T-cell (primary cell): ENCODE measurements at regions of chr2 and their contacts with region 1.

Region 1: DNA sequence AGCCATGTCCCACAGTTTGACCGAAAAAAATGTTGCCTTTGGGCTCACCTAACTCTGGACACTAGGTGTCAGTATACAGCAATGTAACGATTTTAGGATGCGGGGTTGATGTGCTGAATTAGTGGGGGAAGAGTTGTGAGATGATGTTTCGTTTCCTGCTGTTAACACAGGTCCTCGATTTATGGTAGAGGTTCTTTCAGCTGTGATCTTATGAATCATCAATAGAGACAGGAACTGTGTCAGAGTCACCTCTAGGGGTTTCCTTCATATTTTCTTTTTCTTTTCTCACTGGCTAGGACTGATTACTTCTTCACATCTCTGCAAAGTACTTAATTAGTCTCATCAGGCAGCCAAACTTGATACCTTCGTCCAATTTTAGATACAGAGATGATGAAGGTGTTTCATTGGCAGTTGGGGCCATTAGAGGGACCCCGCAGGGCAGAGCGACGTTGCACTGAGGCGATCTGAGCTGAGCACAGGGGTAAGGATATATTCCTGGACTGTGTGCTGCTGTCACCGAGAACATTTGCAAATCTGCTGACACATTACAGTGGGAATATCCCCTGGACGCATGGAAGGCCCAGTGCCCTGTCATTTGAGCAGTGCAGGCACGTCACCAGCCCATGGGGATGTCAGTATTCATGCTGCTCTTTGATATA is 10.2 kb upstream of the MMADHC start:
- DNase-seq: peak in 33 of 35 experiments; percentile 4 to 81 (median 32)
- ATAC-seq: peak; percentile 90 to 95 (median 93)
- H3K4me3 ChIP-seq: no peak overlapping the region
- H3K4me3 Mint-ChIP-seq: peak overlapping the region in 1 of 3 donors; percentile 10
- H3K27ac ChIP-seq: no peak overlapping the region
- H3K27ac Mint-ChIP-seq: peak overlapping the region; percentile 11 to 79
- H3K4me1 ChIP-seq: peaks cover 0 to 7% of the 10 kb centered on the region in 2 experiments
- H3K4me1 Mint-ChIP-seq: peaks cover 17 to 21% (median 17%) of the 10 kb centered on the region in 3 donors
- H3K27me3 ChIP-seq: no peaks in the 10 kb centered on the region
- H3K27me3 Mint-ChIP-seq: peaks cover 8 to 13% of the 10 kb centered on the region in 2 donors

Region 2: GRCh38 chr2:148764815-148765214 is 833.0 kb before region 1 on chr2:
- CTCF ChIA-PET with region 1: no interaction called
- POLR2A ChIA-PET with region 1: no interaction called
- DNase-seq: peak in 4 of 35 experiments; percentile 6 to 52 (median 6)
- ATAC-seq: peak in 3 of 4 experiments; percentile 73 to 99 (median 77)
- H3K4me3 ChIP-seq: no peak overlapping the region
- H3K4me3 Mint-ChIP-seq: no peak overlapping the region
- H3K27ac ChIP-seq: no peak overlapping the region
- H3K27ac Mint-ChIP-seq: peak overlapping the region; percentile 58 to 61
- H3K4me1 ChIP-seq: peaks cover 0 to 2% of the 10 kb centered on the region in 2 experiments
- H3K4me1 Mint-ChIP-seq: peaks cover 31 to 40% (median 39%) of the 10 kb centered on the region in 3 donors
- H3K27me3 ChIP-seq: no peaks in the 10 kb centered on the region
- H3K27me3 Mint-ChIP-seq: no peaks in the 10 kb centered on the region

Region 3: GRCh38 chr2:149587220-149587949 is 10.4 kb before region 1 on chr2 and contains the start of gene MMADHC:
- CTCF ChIA-PET with region 1: interaction called, 8 to 11 read pairs
- POLR2A ChIA-PET with region 1: interaction called in 1 of 2 experiments, 4 read pairs
- DNase-seq: peak; percentile 80 to 97 (median 91)
- ATAC-seq: peak; percentile 97 to 98 (median 98)
- H3K4me3 ChIP-seq: peak within 1 kb of the TSS; percentile 97 to 100
- H3K4me3 Mint-ChIP-seq: peak within 1 kb of the TSS; percentile 96 to 99 (median 99)
- H3K27ac ChIP-seq: peak within 1 kb of the TSS; percentile 96
- H3K27ac Mint-ChIP-seq: peak within 1 kb of the TSS; percentile 96 to 99
- H3K4me1 ChIP-seq: peaks cover 8 to 27% of the 10 kb centered on the region in 2 experiments
- H3K4me1 Mint-ChIP-seq: peaks cover 44 to 57% (median 50%) of the 10 kb centered on the region in 3 donors
- H3K27me3 ChIP-seq: no peaks in the 10 kb centered on the region
- H3K27me3 Mint-ChIP-seq: peaks cover 18 to 23% of the 10 kb centered on the region in 2 donors
- total RNA-seq, gene MMADHC: 56.8 to 65.0 (median 61.4) TPM

Region 4: DNA sequence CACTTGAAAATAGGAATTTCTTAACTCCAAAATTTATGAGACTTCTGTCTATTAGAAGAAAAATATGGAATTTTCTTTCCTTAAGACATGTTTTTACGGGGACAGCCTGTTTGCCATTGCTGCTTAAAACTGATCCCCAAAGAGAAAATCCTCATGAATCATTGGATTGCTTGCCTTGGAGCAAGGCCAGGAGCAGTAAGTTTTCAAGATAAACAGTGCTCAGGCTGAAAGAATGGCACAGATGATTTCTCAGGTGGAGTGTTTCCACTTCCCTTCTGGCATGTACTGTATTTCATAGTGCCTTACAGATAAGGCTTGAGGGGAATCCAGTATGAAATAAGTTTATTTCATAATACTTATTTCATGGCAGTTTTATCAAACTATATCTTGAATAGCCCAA is 64.0 kb after region 1 on chr2:
- CTCF ChIA-PET with region 1: no interaction called
- POLR2A ChIA-PET with region 1: no interaction called
- DNase-seq: no peak
- ATAC-seq: no peak
- H3K4me3 ChIP-seq: no peak overlapping the region
- H3K4me3 Mint-ChIP-seq: no peak overlapping the region
- H3K27ac ChIP-seq: no peak overlapping the region
- H3K27ac Mint-ChIP-seq: no peak overlapping the region
- H3K4me1 ChIP-seq: no peaks in the 10 kb centered on the region
- H3K4me1 Mint-ChIP-seq: no peaks in the 10 kb centered on the region
- H3K27me3 ChIP-seq: no peaks in the 10 kb centered on the region
- H3K27me3 Mint-ChIP-seq: peaks cover 4 to 13% of the 10 kb centered on the region in 2 donors

Region 5: DNA sequence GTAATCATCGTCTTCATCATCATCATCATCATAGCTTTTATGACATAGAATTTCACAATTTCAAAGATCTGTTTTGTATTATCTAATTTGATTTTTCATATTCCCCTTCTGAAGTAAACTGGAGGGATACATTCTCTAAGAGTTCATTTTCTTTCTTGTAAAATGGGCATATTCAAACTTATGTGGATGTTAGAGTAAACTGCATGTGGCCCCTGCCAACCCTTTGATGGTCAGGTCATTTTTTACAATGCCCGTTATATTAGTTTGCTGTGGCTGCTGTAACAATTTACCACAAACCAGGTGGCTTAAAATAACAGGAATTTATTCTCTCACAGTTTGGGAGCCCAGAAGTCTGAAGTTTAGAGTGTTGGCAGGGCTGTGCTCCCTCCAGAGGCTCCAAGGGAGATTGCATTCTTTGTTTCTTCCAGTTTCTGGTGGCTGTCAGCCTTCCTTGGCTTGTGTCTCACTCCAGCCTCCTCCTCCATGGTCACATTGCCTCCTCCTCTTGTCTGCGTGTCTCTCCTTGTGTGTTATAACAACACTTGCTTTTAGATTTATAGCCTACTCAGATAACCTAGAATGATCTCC is 117.3 kb after region 1 on chr2:
- CTCF ChIA-PET with region 1: no interaction called
- POLR2A ChIA-PET with region 1: no interaction called
- DNase-seq: no peak
- ATAC-seq: no peak
- H3K4me3 ChIP-seq: no peak overlapping the region
- H3K4me3 Mint-ChIP-seq: no peak overlapping the region
- H3K27ac ChIP-seq: no peak overlapping the region
- H3K27ac Mint-ChIP-seq: no peak overlapping the region
- H3K4me1 ChIP-seq: no peaks in the 10 kb centered on the region
- H3K4me1 Mint-ChIP-seq: no peaks in the 10 kb centered on the region
- H3K27me3 ChIP-seq: no peaks in the 10 kb centered on the region
- H3K27me3 Mint-ChIP-seq: peaks cover 4 to 10% of the 10 kb centered on the region in 2 donors

Region 6: GRCh38 chr2:149885468-149885867 is 287.7 kb after region 1 on chr2:
- CTCF ChIA-PET with region 1: no interaction called
- POLR2A ChIA-PET with region 1: no interaction called
- DNase-seq: no peak
- ATAC-seq: no peak
- H3K4me3 ChIP-seq: no peak overlapping the region
- H3K4me3 Mint-ChIP-seq: no peak overlapping the region
- H3K27ac ChIP-seq: no peak overlapping the region
- H3K27ac Mint-ChIP-seq: no peak overlapping the region
- H3K4me1 ChIP-seq: no peaks in the 10 kb centered on the region
- H3K4me1 Mint-ChIP-seq: no peaks in the 10 kb centered on the region
- H3K27me3 ChIP-seq: no peaks in the 10 kb centered on the region
- H3K27me3 Mint-ChIP-seq: no peaks in the 10 kb centered on the region

Region 7: DNA sequence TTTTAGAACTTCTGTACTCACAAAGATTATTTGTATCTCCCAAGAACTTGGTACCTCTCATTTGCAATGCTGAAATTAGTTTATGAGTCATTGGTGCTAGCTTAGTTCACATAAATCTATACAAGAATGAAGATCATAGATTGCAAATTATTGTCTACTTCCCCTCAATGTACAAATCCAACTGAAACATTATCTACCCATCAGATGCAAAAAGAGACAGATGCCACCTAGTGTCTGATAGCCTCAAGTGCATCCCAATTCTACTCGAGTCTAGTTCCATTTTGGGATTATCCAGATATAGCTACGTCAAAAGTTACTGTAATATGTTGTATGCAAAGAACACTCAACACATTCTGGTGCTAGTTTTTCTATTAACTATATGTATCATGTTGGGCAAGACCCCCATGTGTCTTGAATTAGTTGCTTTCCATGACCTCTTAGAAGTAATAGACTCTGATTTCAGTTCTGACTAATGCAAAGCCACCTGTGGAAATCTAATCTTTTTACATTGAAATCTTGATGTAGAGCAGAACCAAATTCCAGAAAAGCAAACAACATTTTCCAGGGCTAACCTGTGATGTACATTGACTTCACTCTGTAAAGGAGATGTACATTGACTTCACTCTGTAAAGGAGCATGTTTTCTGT is 1453.9 kb after region 1 on chr2:
- CTCF ChIA-PET with region 1: interaction called, 6 to 22 read pairs
- POLR2A ChIA-PET with region 1: no interaction called
- DNase-seq: peak in 12 of 35 experiments; percentile 1 to 59 (median 6)
- ATAC-seq: peak in 3 of 4 experiments; percentile 37 to 64 (median 52)
- H3K4me3 ChIP-seq: no peak overlapping the region
- H3K4me3 Mint-ChIP-seq: no peak overlapping the region
- H3K27ac ChIP-seq: no peak overlapping the region
- H3K27ac Mint-ChIP-seq: no peak overlapping the region
- H3K4me1 ChIP-seq: no peaks in the 10 kb centered on the region
- H3K4me1 Mint-ChIP-seq: peaks cover 0 to 3% (median 2%) of the 10 kb centered on the region in 3 donors
- H3K27me3 ChIP-seq: no peaks in the 10 kb centered on the region
- H3K27me3 Mint-ChIP-seq: peaks cover 0 to 5% of the 10 kb centered on the region in 2 donors

Region 8: DNA sequence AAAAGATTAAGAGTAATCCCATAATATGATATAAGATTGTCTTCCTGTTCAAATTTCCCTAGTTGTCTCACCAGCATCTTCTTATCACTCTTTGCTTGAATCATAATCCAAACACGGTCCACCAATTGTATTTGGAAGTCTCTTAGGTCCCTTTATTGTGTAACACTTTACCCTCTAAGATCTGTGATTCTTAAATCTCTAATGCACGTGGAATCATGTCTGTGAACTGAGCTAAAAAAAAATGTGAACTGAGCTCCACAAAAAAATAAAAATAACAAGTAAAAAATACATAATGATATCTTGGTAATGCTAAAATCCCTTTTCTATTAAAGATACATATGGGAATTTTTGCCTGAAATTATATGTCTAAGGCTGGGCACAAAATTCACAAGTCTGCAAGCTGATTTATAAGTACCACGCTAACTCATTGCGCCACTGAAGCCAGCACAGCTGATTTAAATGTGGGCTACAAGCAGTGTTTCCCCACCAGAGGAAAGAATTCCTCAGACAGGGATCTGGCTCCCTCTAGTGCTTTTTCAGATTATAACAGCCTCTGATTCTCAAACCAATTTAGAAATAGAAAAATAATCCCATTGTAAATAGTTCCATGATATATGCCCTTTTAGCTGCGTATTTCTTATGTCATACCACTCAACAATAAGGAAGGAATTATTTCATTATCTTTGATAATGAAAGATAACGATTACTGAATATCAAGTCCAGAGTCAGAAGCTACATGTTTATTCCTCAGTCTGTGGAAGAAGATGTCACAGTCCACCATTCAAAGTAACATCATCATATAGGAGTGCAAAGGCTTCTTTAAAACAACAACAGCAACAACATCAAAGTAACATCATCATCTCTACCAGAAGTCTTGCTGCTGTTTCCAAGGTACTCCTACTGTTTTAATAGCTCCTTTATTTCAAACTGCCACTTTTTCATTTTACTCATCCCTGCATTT is 1641.0 kb after region 1 on chr2:
- CTCF ChIA-PET with region 1: interaction called, 9 to 18 read pairs
- POLR2A ChIA-PET with region 1: no interaction called
- DNase-seq: peak in 18 of 35 experiments; percentile 4 to 70 (median 12)
- ATAC-seq: peak in 3 of 4 experiments; percentile 48 to 62 (median 51)
- H3K4me3 ChIP-seq: no peak overlapping the region
- H3K4me3 Mint-ChIP-seq: no peak overlapping the region
- H3K27ac ChIP-seq: no peak overlapping the region
- H3K27ac Mint-ChIP-seq: no peak overlapping the region
- H3K4me1 ChIP-seq: no peaks in the 10 kb centered on the region
- H3K4me1 Mint-ChIP-seq: no peaks in the 10 kb centered on the region
- H3K27me3 ChIP-seq: no peaks in the 10 kb centered on the region
- H3K27me3 Mint-ChIP-seq: peaks cover 0 to 1% of the 10 kb centered on the region in 2 donors